Testis (tissue), 5 donors: ENCODE measurements at regions of chr18 and their contacts with region 1.

Region 1: DNA sequence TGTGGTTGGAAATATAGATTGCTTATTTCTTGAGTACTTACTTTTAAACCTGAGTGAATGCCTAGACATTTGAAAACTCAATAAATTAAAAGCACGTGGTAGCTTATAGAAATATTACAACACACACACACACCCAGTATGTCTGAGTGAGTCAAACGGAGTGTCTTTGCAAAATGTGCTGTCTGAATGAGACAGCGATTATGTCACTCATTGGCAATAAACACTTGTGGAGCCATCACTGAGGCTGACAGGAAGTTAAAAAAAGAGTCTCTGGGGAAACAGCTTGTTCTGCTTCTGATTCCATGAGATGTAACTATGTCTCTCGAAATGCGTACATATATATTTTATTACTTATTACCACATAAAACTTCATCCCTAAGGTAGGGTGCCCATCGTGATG is 22.3 kb upstream of the VPS4B start:
- DNase-seq: no peak
- H3K4me3 ChIP-seq: no peak overlapping the region
- H3K27ac ChIP-seq: no peak overlapping the region
- H3K4me1 ChIP-seq: peaks cover 9% of the 10 kb centered on the region
- H3K27me3 ChIP-seq: no peaks in the 10 kb centered on the region
- CTCF ChIP-seq: no peak
- POLR2A ChIP-seq: no peak

Region 2: GRCh38 chr18:63016270-63016669 is 428.3 kb before region 1 on chr18:
- intact Hi-C with region 1: loop called (anchors 5 kb)
- DNase-seq: peak; percentile 68
- H3K4me3 ChIP-seq: no peak overlapping the region
- H3K27ac ChIP-seq: no peak overlapping the region
- H3K4me1 ChIP-seq: no peaks in the 10 kb centered on the region
- H3K27me3 ChIP-seq: no peaks in the 10 kb centered on the region
- CTCF ChIP-seq: peak; percentile 74 to 83 (median 75)
- POLR2A ChIP-seq: no peak